SK-N-SH (cell line): ENCODE measurements at regions of chr1 and their contacts with region 1.

Region 1: DNA sequence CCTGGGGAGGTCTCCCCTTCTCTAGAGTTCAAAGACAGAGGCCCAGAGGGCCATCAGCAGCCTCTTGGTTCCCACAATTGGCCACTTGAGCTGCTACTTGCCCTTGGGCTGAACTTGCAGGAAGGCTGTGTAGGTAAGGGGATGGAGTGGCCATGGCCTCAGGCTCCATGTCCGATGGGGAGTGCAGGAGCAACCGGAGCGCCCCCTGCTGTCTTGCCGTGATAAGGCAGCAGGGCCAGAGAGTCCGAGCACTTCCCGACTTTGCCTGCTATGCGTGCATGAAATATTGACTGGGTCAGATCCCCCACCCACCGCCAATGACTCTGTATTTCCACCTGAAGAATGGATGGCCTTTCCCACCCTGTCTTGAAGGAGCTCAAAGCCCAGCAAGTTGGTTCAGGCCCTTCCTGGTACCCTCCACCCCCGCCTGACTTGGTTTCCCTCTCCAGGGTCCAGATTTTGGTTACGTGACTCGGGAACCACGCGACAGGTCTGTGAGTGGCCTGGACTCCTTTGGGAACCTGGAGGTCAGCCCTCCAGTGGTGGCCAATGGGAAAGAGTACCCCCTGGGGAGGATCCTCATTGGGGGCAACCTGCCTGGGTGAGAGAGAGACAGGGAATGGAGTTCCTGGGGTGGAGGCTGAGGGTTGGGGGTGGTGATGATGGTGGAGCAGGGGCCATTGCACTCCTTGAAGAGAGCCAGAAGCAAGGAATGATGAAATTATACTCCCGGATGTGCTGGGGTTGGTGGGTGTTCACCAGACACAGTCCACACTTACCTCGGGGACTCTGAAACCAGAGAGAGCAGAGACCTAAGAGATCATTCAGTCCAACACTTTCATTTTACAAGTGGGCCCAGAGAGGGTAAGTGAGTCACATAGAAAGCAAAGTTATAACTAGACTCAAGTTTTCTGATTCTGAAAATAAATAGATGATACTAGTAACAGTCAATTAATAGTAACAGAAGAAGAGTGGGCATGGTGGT is 25.6 kb downstream of the PADI3 start:
- DNase-seq: peak; percentile 76
- H3K4me3 ChIP-seq: no peak overlapping the region
- H3K27ac ChIP-seq: no peak overlapping the region
- H3K4me1 ChIP-seq: peaks cover 0 to 4% of the 10 kb centered on the region in 2 experiments; a peak in 1 of 4 replicates
- H3K27me3 ChIP-seq: no peaks in the 10 kb centered on the region
- CTCF ChIP-seq: peak; percentile 72
- EP300 ChIP-seq: no peak
- RAD21 ChIP-seq: peak; percentile 57

Region 2: GRCh38 chr1:17244816-17245740 is 29.4 kb before region 1 on chr1:
- CTCF ChIA-PET with region 1: interaction called, 11 read pairs
- POLR2A ChIA-PET with region 1: no interaction called
- DNase-seq: peak; percentile 60
- H3K4me3 ChIP-seq: no peak overlapping the region
- H3K27ac ChIP-seq: no peak overlapping the region
- H3K4me1 ChIP-seq: peaks cover 0 to 7% of the 10 kb centered on the region in 2 experiments; a peak in 1 of 4 replicates
- H3K27me3 ChIP-seq: no peaks in the 10 kb centered on the region
- CTCF ChIP-seq: no peak
- EP300 ChIP-seq: no peak
- RAD21 ChIP-seq: no peak

Region 3: GRCh38 chr1:17307946-17308345 is 33.5 kb after region 1 on chr1 and contains the start of gene PADI4:
- CTCF ChIA-PET with region 1: no interaction called
- POLR2A ChIA-PET with region 1: no interaction called
- DNase-seq: no peak
- H3K4me3 ChIP-seq: no peak within 1 kb of the TSS
- H3K27ac ChIP-seq: no peak within 1 kb of the TSS
- H3K4me1 ChIP-seq: no peaks in the 10 kb centered on the region
- H3K27me3 ChIP-seq: no peaks in the 10 kb centered on the region; the same call in 1 of the 2 replicates
- CTCF ChIP-seq: no peak
- EP300 ChIP-seq: no peak
- RAD21 ChIP-seq: no peak
- polyA plus RNA-seq, gene PADI4: not detected in 2 replicates

Region 4: DNA sequence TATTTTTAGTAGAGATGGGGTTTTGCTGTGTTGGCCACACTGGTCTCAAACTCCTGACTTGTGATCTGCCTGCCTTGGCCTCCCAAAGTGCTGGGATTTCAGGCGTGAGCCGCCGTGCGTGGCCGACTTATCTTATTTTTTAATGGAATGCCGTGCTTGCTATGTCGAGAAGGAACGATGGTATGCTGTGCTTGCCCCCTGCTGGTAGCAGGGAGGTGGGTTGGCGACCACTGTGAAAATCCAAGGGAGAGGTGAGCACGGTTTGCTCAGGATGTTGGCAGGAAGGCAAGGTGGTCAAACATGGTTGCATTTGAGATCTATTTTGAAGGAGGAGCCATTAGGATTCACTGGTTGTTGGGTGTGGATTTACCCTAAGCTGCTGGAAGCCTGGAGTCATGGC is 210.8 kb after region 1 on chr1:
- CTCF ChIA-PET with region 1: no interaction called
- POLR2A ChIA-PET with region 1: no interaction called
- DNase-seq: no peak
- H3K4me3 ChIP-seq: no peak overlapping the region
- H3K27ac ChIP-seq: no peak overlapping the region
- H3K4me1 ChIP-seq: peaks cover 6% of the 10 kb centered on the region in 2 experiments; a peak in 2 of 4 replicates
- H3K27me3 ChIP-seq: no peaks in the 10 kb centered on the region
- CTCF ChIP-seq: peak; percentile 61
- EP300 ChIP-seq: no peak
- RAD21 ChIP-seq: peak; percentile 68